Psoas muscle (tissue), 8 donors: ENCODE measurements at regions of chr6 and their contacts with region 1.

Region 1: DNA sequence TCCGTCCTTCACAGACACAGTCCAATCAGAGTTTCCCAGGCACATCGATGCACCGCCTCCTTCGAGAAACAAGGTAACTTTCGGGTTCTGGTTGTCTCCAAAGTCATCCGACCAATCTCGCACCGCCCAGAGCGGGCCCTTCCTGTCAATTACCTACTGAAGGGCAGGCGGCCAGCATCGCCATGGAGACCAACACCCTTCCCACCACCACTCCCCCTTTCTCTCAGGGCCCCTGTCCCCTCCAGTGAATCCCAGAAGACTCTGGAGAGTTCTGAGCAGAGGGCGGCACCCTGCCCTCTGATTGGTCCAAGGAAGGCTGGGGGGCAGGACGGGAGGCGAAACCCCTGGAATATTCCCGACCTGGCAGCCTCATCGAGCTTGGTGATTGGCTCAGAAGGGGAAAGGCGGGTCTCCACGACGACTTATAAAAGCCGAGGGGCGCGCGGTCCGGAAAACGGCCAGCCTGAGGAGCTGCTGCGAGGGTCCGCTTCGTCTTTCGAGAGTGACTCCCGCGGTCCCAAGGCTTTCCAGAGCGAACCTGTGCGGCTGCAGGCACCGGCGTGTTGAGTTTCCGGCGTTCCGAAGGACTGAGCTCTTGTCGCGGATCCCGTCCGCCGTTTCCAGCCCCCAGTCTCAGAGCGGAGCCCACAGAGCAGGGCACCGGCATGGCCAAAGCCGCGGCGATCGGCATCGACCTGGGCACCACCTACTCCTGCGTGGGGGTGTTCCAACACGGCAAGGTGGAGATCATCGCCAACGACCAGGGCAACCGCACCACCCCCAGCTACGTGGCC is at the start of gene HSPA1B:
- DNase-seq: peak; percentile 99 to 100
- ATAC-seq: peak; percentile 86 to 95 (median 90)
- H3K4me3 ChIP-seq: peak within 1 kb of the TSS; percentile 81
- H3K27ac ChIP-seq: peak within 1 kb of the TSS; percentile 91
- H3K4me1 ChIP-seq: peaks cover 32% of the 10 kb centered on the region
- H3K27me3 ChIP-seq: no peaks in the 10 kb centered on the region
- CTCF ChIP-seq: no peak
- total RNA-seq, gene HSPA1B: 199 to 721 (median 347) TPM

Region 2: DNA sequence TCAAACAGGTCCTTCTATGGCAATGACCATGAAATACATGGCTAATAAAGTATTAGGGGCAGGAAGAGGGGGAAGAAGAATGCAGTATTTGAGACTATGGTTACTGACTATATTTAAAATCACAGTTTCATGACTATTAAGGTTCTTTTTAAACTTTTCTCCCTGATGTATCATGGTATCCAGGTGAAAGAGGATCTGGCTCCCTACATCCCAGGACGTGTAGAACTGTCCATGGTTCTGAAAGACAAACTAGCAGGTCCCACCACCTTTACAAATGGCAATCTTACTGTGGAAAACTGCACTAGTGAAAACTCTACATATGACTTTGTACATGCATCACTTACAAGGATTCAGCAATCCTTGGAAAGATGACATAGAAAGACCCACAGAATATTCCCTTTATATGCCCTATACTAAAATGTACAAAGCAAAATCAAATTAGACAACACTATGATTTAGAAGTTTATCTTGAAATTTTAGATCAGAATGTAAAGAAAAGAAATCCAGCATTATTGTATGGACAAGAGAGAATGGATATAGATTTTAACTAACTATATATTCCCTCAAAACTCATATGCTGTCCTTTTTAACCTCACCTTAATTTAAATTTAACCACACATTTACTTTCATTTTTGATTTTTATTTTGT is 1449.1 kb before region 1 on chr6:
- intact Hi-C with region 1: no loop called
- DNase-seq: no peak
- ATAC-seq: no peak
- H3K4me3 ChIP-seq: no peak overlapping the region
- H3K27ac ChIP-seq: no peak overlapping the region
- H3K4me1 ChIP-seq: no peaks in the 10 kb centered on the region
- H3K27me3 ChIP-seq: peaks cover 0 to 18% (median 3%) of the 10 kb centered on the region in 3 donors
- CTCF ChIP-seq: no peak

Region 3: DNA sequence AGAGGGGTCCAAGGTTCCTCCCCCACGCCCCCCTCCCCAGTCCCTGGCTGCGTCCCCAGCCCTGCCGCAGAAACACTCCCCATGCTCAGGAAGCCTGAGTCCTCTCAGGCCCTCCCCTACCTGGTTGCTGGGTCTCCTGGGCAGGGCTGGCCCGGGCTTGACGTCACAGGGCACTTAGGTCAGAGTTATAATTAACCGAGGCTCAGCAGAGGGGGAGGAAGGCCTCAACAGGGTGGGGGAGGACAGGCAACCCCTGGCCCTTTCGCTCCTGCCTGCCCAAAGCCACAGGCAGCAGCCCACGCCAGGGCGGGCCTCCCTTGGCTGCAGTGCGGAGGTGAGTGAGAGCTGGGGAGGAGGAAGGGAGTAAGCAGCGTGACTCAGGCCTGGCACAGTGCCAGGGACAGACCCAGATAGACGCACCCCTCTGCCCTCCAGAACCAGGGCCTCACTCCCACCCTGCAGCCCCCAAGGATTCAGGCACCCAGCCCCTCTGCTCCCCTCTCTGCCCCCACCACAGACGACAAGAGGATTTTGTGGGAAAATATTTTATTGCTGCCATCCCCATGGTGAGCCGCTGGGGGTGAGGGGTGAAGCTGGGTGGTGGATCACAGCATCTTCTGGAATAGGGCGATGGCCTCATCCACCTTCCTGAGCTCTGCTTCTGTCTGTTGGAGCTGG is 50.4 kb before region 1 on chr6 and contains the start of gene VWA7:
- intact Hi-C with region 1: loop called (anchors 2 to 5 kb)
- DNase-seq: peak; percentile 73 to 86
- ATAC-seq: peak; percentile 80 to 89 (median 86)
- H3K4me3 ChIP-seq: peak within 1 kb of the TSS; percentile 55
- H3K27ac ChIP-seq: peak within 1 kb of the TSS; percentile 88
- H3K4me1 ChIP-seq: peaks cover 17% of the 10 kb centered on the region
- H3K27me3 ChIP-seq: no peaks in the 10 kb centered on the region
- CTCF ChIP-seq: no peak
- total RNA-seq, gene VWA7: 5.2 to 8.0 (median 7.5) TPM

Region 4: GRCh38 chr6:31795616-31796298 is 31.7 kb before region 1 on chr6 and contains the start of gene VARS1:
- intact Hi-C with region 1: loop called (anchors 2 to 5 kb)
- DNase-seq: peak; percentile 93 to 96
- ATAC-seq: peak; percentile 90 to 93 (median 92)
- H3K4me3 ChIP-seq: peak within 1 kb of the TSS; percentile 81
- H3K27ac ChIP-seq: peak within 1 kb of the TSS; percentile 94
- H3K4me1 ChIP-seq: peaks cover 24% of the 10 kb centered on the region
- H3K27me3 ChIP-seq: no peaks in the 10 kb centered on the region
- CTCF ChIP-seq: peak; percentile 80
- total RNA-seq, gene VARS1: 53.2 to 108 (median 76.1) TPM

Region 5: DNA sequence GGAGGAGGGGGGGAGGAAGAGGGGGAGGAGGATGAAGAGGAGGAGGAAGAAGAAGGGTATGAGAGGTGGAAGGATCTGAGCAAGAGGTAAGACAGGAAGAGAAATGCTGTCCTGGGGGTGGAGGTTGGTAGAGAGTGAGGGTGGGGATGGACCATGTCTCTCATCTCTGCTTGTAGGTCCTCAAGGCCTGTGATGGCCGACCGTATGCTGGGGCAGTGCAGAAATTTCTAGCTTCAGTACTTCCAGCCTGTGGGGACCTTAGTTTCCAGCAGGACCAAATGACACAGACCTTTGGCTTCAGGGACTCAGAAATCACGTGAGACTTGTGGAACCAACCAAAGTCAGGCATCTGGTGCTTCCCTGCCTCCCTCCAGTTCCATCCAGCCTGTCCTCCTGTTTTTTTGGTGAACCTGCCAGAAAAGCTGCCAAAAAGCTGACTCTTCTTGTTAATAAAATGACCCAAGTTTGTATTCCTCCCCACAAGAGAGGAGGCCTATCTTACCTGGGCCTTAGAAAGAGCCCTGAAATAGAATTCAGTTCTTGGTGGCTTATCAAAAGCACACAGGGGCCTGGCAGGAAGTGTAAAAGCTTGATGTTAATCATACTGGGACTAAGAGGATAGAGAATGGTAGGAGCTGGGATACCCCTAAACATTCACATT is 151.9 kb after region 1 on chr6:
- intact Hi-C with region 1: no loop called
- DNase-seq: no peak
- ATAC-seq: no peak
- H3K4me3 ChIP-seq: no peak overlapping the region
- H3K27ac ChIP-seq: no peak overlapping the region
- H3K4me1 ChIP-seq: no peaks in the 10 kb centered on the region
- H3K27me3 ChIP-seq: no peaks in the 10 kb centered on the region
- CTCF ChIP-seq: no peak

Region 6: DNA sequence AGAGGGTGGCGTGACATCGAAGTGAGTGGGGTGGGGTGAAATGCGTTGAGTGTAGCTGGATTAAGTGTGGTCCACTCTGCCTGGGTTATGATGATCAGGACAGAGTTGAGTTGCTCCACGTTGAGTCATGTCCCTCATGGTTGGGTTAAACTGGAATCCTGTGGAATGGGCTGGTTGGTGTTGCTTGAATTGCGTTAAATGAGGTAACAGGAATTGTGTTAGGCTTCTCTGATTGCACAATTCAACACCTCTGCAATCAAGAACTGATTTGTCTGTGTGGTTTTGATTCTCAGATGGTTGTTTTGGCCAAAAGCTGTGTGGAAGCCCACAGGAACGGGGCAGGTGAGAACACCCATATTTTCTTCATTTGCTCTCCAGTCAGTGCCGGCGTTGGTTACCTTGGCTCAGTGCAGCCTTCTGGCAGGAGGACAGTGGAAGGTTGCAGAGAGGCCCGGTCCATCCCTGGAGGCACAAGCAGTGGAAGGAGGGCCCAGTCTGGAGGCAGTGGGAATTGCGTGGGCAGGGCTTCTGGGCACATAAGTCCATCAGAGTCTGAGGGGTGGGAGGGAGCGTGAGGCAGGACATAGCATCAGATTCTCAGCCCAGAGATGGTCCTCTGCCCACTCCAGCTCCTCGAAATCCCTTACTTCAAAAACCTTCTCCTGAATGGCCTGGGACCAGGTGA is 384.7 kb after region 1 on chr6:
- intact Hi-C with region 1: no loop called
- DNase-seq: no peak
- ATAC-seq: no peak
- H3K4me3 ChIP-seq: no peak overlapping the region
- H3K27ac ChIP-seq: no peak overlapping the region
- H3K4me1 ChIP-seq: no peaks in the 10 kb centered on the region
- H3K27me3 ChIP-seq: no peaks in the 10 kb centered on the region
- CTCF ChIP-seq: no peak